Naive thymus-derived CD4-positive, alpha-beta T cell (primary cell): ENCODE measurements at regions of chr9 and their contacts with region 1.

Region 1: GRCh38 chr9:112333639-112334431 is 416 bp upstream of the PTBP3 start:
- DNase-seq: peak; percentile 78 to 94 (median 88)
- ATAC-seq: peak; percentile 94
- H3K4me3 ChIP-seq: peak overlapping the region; percentile 88
- H3K4me3 Mint-ChIP-seq: peak overlapping the region; percentile 82 to 98 (median 93)
- H3K27ac ChIP-seq: peak overlapping the region; percentile 95
- H3K27ac Mint-ChIP-seq: peak overlapping the region; percentile 88 to 97 (median 90)
- H3K4me1 ChIP-seq: peaks cover 14 to 19% of the 10 kb centered on the region in 2 donors
- H3K4me1 Mint-ChIP-seq: peaks cover 21 to 44% (median 35%) of the 10 kb centered on the region in 7 donors
- H3K27me3 ChIP-seq: no peaks in the 10 kb centered on the region
- H3K27me3 Mint-ChIP-seq: no peaks in the 10 kb centered on the region

Region 2: GRCh38 chr9:111631071-111631971 is 702.5 kb before region 1 on chr9 and contains the start of gene DNAJC25:
- CTCF ChIA-PET with region 1: no interaction called
- POLR2A ChIA-PET with region 1: interaction called, 5 read pairs
- intact Hi-C with region 1: loop called (anchors 1 kb)
- DNase-seq: peak; percentile 94 to 98 (median 97)
- ATAC-seq: peak; percentile 97
- H3K4me3 ChIP-seq: peak within 1 kb of the TSS; percentile 82
- H3K4me3 Mint-ChIP-seq: peak within 1 kb of the TSS; percentile 81 to 99 (median 94)
- H3K27ac ChIP-seq: peak within 1 kb of the TSS; percentile 83
- H3K27ac Mint-ChIP-seq: peak within 1 kb of the TSS; percentile 78 to 95 (median 89)
- H3K4me1 ChIP-seq: peaks cover 14 to 21% of the 10 kb centered on the region in 2 donors
- H3K4me1 Mint-ChIP-seq: peaks cover 29 to 57% (median 47%) of the 10 kb centered on the region in 7 donors
- H3K27me3 ChIP-seq: no peaks in the 10 kb centered on the region
- H3K27me3 Mint-ChIP-seq: no peaks in the 10 kb centered on the region
- total RNA-seq, gene DNAJC25: 4.0 to 6.0 (median 5.2) TPM

Region 3: GRCh38 chr9:111916234-111916645 is 417.6 kb before region 1 on chr9:
- CTCF ChIA-PET with region 1: no interaction called
- POLR2A ChIA-PET with region 1: no interaction called
- intact Hi-C with region 1: loop called (anchors 5 to 10 kb)
- DNase-seq: peak in 1 of 9 donors; percentile 46
- ATAC-seq: no peak
- H3K4me3 ChIP-seq: no peak overlapping the region
- H3K4me3 Mint-ChIP-seq: peak overlapping the region in 8 of 10 donors; percentile 15 to 67 (median 56)
- H3K27ac ChIP-seq: no peak overlapping the region
- H3K27ac Mint-ChIP-seq: peak overlapping the region in 6 of 9 donors; percentile 4 to 70 (median 43)
- H3K4me1 ChIP-seq: peaks cover 25 to 36% of the 10 kb centered on the region in 2 donors
- H3K4me1 Mint-ChIP-seq: peaks cover 33 to 67% (median 63%) of the 10 kb centered on the region in 7 donors
- H3K27me3 ChIP-seq: no peaks in the 10 kb centered on the region
- H3K27me3 Mint-ChIP-seq: no peaks in the 10 kb centered on the region

Region 4: DNA sequence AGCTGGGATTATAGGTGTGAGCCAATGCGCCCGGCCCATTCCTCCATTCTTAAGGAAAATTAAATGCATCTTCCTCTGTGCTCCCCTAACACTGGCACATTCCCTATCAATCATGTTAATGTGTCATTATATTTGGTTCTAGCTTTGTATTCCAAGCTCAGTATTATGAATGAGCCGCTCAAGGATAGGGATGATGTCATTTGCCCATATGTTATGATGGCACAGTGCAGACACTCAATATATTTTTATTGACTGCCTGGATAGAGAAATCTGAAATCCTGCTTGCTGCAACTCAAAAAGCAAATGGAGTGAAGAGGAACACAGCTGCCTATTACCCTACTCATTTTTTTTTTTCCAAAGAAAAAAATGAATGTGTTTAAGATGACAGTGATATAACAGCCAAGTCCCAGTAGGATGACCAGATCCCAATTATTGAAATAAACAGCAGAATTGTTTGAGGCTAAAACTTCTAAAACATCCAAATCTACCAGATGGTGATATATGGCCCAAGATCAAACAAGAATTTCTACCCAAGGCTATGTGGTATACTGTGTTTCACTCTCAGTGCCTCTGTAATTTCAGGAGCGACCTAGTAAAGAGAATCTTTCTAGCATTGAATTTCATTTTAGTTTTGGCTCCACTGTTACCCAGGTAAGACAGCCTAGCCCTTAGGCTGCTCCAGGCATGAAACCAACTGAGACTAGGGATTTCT is 175.0 kb before region 1 on chr9:
- CTCF ChIA-PET with region 1: no interaction called
- POLR2A ChIA-PET with region 1: no interaction called
- intact Hi-C with region 1: no loop called
- DNase-seq: no peak
- ATAC-seq: no peak
- H3K4me3 ChIP-seq: no peak overlapping the region
- H3K4me3 Mint-ChIP-seq: no peak overlapping the region
- H3K27ac ChIP-seq: no peak overlapping the region
- H3K27ac Mint-ChIP-seq: no peak overlapping the region
- H3K4me1 ChIP-seq: no peaks in the 10 kb centered on the region
- H3K4me1 Mint-ChIP-seq: peaks cover 0 to 14% (median 7%) of the 10 kb centered on the region in 7 donors
- H3K27me3 ChIP-seq: no peaks in the 10 kb centered on the region
- H3K27me3 Mint-ChIP-seq: no peaks in the 10 kb centered on the region

Region 5: DNA sequence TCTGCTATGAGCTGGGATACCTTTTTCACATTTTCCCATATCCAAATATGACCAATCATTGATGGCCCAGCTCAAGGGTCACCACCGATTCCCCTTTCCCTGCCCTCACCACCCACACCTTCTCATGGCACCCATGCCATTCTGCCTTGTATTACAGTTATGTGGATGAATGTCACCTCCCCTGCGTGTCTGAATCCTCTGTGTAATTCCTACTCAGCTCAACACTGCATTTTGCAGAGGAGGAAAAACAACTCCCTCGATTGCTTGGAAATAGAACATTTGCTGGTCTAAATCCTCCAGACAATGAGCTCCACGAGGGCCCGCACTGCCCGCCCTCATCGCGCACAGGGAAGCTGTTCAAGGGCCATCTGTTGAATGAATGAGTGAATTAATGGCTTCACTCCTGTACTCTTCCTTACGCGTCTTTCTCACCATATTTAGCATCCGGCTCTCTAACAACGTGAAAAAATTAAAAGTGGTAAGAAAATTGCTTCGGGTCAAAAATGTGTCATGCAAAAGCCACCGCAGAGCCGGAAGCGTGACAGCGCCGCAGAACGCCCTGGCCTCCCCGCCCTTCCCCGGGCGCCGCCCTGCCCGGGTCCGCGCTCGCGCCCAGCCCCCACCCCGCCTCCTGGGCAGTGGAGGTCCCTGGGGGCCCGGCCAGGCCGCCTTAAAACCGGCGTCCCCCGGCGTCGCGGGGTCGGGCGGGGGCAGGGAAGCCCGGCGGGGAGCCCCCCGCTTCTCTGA is 159.4 kb before region 1 on chr9:
- CTCF ChIA-PET with region 1: no interaction called
- POLR2A ChIA-PET with region 1: interaction called, 8 read pairs
- intact Hi-C with region 1: loop called (anchors 1 kb)
- DNase-seq: peak; percentile 42 to 80 (median 63)
- ATAC-seq: peak; percentile 87
- H3K4me3 ChIP-seq: peak overlapping the region; percentile 67
- H3K4me3 Mint-ChIP-seq: peak overlapping the region; percentile 83 to 94 (median 90)
- H3K27ac ChIP-seq: peak overlapping the region; percentile 9
- H3K27ac Mint-ChIP-seq: peak overlapping the region; percentile 65 to 95 (median 87)
- H3K4me1 ChIP-seq: peaks cover 33 to 54% of the 10 kb centered on the region in 2 donors
- H3K4me1 Mint-ChIP-seq: peaks cover 49 to 81% (median 73%) of the 10 kb centered on the region in 7 donors
- H3K27me3 ChIP-seq: no peaks in the 10 kb centered on the region
- H3K27me3 Mint-ChIP-seq: peaks cover 0 to 3% (median 0%) of the 10 kb centered on the region in 5 donors

Region 6: DNA sequence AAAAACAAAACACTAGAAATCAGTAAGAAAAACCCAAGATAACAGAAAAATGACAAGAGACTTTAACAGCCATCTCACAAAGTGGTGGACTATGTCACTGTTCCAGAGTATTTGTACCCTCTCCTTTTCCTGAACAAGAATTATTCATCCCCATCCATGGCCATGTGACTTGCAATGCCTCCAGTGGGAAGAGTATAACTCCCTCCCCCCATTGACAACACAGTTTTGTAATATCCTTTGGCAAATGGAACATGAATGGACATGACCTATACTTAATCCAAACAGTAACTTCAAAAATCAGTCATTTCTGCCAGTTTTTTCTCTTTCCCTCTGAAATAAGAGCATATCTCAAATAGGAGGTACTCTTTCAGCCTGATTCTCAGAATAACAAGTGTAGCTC is 34.3 kb before region 1 on chr9:
- CTCF ChIA-PET with region 1: no interaction called
- POLR2A ChIA-PET with region 1: no interaction called
- intact Hi-C with region 1: loop called in 1 of 2 experiments (anchors 2 kb)
- DNase-seq: no peak
- ATAC-seq: no peak
- H3K4me3 ChIP-seq: no peak overlapping the region
- H3K4me3 Mint-ChIP-seq: peak overlapping the region in 1 of 10 donors; percentile 25
- H3K27ac ChIP-seq: no peak overlapping the region
- H3K27ac Mint-ChIP-seq: peak overlapping the region in 4 of 9 donors; percentile 1 to 62 (median 40)
- H3K4me1 ChIP-seq: peaks cover 0 to 5% of the 10 kb centered on the region in 2 donors
- H3K4me1 Mint-ChIP-seq: peaks cover 32 to 71% (median 61%) of the 10 kb centered on the region in 7 donors
- H3K27me3 ChIP-seq: no peaks in the 10 kb centered on the region
- H3K27me3 Mint-ChIP-seq: no peaks in the 10 kb centered on the region

Region 7: DNA sequence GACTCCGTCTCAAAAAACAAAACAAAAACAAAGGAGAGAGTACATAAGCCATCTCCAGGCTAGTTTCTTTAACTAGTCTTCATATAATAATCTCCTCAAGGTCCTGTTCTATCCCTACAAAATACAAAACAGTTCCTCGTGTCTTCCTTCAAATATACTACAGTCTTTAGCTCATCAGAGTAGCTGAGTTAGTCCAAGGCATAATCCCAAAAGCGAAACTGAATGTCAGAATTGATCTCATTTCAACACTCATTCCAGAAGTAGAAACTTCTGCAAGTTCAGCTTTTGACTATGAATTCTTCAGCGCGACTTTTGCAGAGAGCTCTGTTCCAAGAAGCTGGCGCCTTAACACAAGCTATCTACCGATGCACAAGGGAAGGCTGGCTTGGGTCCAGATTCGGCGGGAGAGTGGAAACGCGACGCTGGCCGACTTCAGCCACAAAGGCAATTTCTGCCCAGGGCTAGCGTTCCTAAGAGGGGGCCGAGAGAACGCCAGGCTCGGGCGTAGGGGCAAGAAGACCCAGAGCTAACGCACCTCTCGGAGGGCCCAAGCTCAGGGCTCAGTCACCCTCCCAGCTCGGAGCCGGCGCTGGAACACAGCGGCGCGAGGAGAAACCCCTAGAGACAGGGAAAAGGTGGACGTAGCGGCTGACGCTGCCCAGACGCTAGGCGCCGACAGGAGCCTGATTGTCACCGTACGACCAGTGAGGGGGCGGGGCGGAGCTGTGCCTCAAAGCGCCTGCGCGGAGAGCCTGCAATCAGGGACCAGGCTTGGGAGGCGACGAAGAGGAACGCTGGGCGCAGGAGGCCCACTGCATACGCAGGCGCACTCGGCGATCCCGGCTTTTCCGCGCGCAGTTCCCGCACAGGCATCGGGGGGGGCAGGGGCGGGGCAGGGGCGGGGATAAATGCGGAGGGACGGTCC is 45.6 kb after region 1 on chr9:
- CTCF ChIA-PET with region 1: no interaction called
- POLR2A ChIA-PET with region 1: interaction called, 20 read pairs
- intact Hi-C with region 1: loop called (anchors 1 kb)
- DNase-seq: peak; percentile 89 to 97 (median 93)
- ATAC-seq: peak; percentile 98
- H3K4me3 ChIP-seq: peak overlapping the region; percentile 78
- H3K4me3 Mint-ChIP-seq: peak overlapping the region; percentile 86 to 100 (median 99)
- H3K27ac ChIP-seq: peak overlapping the region; percentile 85
- H3K27ac Mint-ChIP-seq: peak overlapping the region; percentile 84 to 99 (median 97)
- H3K4me1 ChIP-seq: peaks cover 14 to 17% of the 10 kb centered on the region in 2 donors
- H3K4me1 Mint-ChIP-seq: peaks cover 24 to 61% (median 53%) of the 10 kb centered on the region in 7 donors
- H3K27me3 ChIP-seq: no peaks in the 10 kb centered on the region
- H3K27me3 Mint-ChIP-seq: no peaks in the 10 kb centered on the region

Region 8: GRCh38 chr9:113150670-113151611 is 817.1 kb after region 1 on chr9 and contains the start of gene SLC31A2:
- CTCF ChIA-PET with region 1: no interaction called
- POLR2A ChIA-PET with region 1: interaction called, 3 read pairs
- intact Hi-C with region 1: loop called (anchors 2 kb)
- DNase-seq: peak; percentile 73 to 93 (median 80)
- ATAC-seq: peak; percentile 92
- H3K4me3 ChIP-seq: peak within 1 kb of the TSS; percentile 78
- H3K4me3 Mint-ChIP-seq: peak within 1 kb of the TSS; percentile 58 to 88 (median 84)
- H3K27ac ChIP-seq: peak within 1 kb of the TSS; percentile 73
- H3K27ac Mint-ChIP-seq: peak within 1 kb of the TSS; percentile 38 to 76 (median 68)
- H3K4me1 ChIP-seq: peaks cover 10 to 15% of the 10 kb centered on the region in 2 donors
- H3K4me1 Mint-ChIP-seq: peaks cover 16 to 42% (median 36%) of the 10 kb centered on the region in 7 donors
- H3K27me3 ChIP-seq: no peaks in the 10 kb centered on the region
- H3K27me3 Mint-ChIP-seq: peaks cover 1 to 6% (median 4%) of the 10 kb centered on the region in 5 donors
- total RNA-seq, gene SLC31A2: 5.3 to 39.2 (median 5.4) TPM